PC-9 (cell line): ENCODE measurements at regions of chr10 and their contacts with region 1.

Region 1: GRCh38 chr10:12006671-12007070 is 35.9 kb downstream of the UPF2 start:
- DNase-seq: no peak
- H3K4me3 ChIP-seq: no peak overlapping the region
- H3K27ac ChIP-seq: no peak overlapping the region
- H3K4me1 ChIP-seq: no peaks in the 10 kb centered on the region
- H3K27me3 ChIP-seq: no peaks in the 10 kb centered on the region
- CTCF ChIP-seq: no peak

Region 2: DNA sequence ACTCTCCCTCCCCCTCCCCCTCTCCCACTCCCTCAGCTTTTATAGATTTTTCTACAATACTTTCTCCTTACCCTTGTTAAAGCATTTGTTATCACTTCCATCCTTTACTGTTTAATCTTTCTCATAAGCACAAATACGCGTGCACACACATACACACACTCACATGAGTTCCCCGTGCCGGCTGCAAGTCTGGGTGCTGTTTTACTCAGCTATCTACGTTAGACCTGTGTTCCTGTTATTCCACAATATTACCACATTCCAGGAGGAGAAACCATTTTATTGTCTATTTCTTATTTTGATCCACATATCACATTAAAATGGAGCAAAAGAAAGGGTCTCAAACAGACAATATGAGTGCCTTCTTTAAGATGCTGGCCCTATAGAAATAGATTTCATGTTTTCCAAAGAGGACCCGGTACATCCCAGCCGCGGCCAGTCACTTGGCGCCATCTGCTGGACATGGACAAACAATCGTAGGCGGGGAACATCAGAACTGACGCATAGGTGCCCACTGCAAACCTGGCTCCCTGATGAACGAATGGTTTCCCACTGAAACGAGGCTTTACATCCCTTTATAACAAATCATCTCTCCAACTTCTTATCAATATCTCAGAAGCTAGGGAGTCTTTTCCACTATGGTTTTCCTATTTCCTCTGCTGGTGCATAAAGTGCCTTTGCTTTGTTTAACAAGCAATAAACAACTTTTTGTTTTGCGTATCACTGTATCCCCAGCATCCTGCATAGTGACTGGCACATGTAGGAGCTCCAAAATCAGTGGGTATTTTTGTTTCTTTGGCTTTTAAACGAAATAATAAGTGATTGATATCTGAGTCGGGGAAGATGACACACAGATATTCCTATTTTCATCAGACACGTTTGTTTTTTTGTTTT is 1068.1 kb after region 1 on chr10:
- CTCF ChIA-PET with region 1: interaction called, 11 read pairs
- POLR2A ChIA-PET with region 1: no interaction called
- intact Hi-C with region 1: no loop called
- DNase-seq: peak; percentile 37 to 64
- H3K4me3 ChIP-seq: no peak overlapping the region
- H3K27ac ChIP-seq: no peak overlapping the region
- H3K4me1 ChIP-seq: no peaks in the 10 kb centered on the region
- H3K27me3 ChIP-seq: no peaks in the 10 kb centered on the region
- CTCF ChIP-seq: peak; percentile 81